Left ventricle myocardium inferior (tissue), 1 donor: ENCODE measurements at regions of chr13 and their contacts with region 1.

Region 1: GRCh38 chr13:28636674-28637317 is 22.1 kb upstream of the POMP start:
- DNase-seq: no peak
- H3K4me3 ChIP-seq: no peak overlapping the region
- H3K27ac ChIP-seq: peak overlapping the region; percentile 59
- H3K4me1 ChIP-seq: peaks cover 36% of the 10 kb centered on the region
- H3K27me3 ChIP-seq: no peaks in the 10 kb centered on the region
- CTCF ChIP-seq: peak; percentile 93

Region 2: GRCh38 chr13:28324181-28324789 is 312.5 kb before region 1 on chr13:
- intact Hi-C with region 1: loop called (anchors 5 kb)
- DNase-seq: peak; percentile 33
- H3K4me3 ChIP-seq: peak overlapping the region; percentile 1
- H3K27ac ChIP-seq: peak overlapping the region; percentile 77
- H3K4me1 ChIP-seq: peaks cover 64% of the 10 kb centered on the region
- H3K27me3 ChIP-seq: no peaks in the 10 kb centered on the region
- CTCF ChIP-seq: peak; percentile 85

Region 3: DNA sequence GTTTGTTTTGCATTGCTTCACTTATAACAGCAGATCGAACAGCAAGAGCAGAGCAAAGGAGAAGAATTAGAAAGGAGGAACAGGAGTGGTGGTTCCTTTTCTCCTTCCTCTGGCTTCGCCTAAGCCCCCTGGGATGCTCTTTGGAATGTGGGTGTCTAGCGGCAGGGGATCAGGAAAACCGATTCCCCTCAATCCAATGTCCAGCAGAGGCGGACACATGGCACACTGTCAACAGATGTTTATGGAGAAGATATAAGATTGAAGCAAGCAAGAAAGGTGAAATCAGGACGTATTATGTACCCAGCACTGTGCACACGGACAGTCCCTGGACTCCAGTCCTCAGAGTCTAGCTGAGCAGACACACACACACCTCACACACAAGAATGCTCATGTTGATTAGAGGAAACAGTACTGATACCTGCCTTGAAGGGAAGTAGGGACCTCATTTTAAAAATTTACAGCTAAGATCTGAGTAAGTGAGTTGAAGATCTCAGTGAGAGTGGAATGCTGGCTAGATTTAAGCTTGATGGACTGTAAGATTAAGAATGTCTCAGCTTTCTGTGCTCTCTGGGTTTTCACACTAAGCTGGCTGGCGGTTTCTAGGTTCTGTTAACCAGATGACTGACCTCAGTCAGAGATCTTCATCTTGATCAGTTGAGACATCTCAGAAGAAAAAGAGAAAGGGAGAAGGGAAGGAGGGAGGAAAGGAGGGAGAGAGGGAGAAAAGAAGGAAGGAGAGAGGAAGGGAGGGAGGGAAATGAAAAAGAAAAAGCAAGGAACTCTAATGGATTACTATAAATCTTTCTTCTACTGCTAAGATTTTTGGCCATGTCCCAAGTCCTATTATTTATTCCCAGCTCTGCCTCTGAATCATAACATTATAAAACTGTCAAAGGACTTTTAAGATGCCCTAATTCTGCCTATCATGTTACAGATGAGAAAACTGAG is 186.7 kb before region 1 on chr13:
- intact Hi-C with region 1: no loop called
- DNase-seq: no peak
- H3K4me3 ChIP-seq: no peak overlapping the region
- H3K27ac ChIP-seq: no peak overlapping the region
- H3K4me1 ChIP-seq: peaks cover 33% of the 10 kb centered on the region
- H3K27me3 ChIP-seq: no peaks in the 10 kb centered on the region
- CTCF ChIP-seq: no peak

Region 4: DNA sequence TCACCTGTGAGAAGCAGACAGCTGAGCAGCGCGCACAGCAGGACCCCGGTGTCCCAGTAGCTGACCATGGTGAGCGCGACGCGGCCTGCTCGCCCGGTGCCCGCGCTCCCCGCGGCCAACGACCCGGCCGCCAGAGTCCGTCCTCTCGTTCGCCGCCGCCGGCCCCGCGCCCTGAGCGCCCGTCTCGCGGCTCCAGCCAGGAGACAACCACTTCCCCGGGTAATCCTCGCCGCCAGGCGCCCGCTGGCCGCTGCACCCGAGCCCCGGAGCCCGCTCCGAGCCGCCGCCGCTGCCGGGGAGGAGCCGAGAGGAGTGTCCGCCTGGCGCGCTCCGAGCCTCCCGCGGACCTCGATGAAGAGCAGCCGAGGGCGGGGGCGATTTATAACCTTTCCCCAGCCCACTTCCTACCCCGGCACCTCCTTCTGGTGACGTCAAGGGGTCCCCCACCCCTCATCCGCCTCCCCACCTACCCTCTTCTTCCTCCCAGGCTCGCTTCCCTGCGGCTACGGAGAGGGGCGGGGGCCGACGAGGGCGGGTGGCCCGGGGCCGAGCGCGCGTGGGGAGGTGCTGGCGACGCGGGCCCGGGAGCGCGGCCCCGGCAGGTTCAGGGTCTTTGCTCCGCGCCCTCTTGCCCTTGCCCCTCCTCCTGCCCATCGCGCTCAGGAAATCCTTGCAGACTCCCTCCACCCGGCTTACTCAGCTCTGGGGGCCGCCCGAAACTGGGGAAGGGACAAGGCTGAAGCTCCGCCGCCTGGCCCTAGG is 141.8 kb before region 1 on chr13 and contains the start of gene FLT1:
- intact Hi-C with region 1: loop called (anchors 10 kb)
- DNase-seq: peak; percentile 77
- H3K4me3 ChIP-seq: peak within 1 kb of the TSS; percentile 75
- H3K27ac ChIP-seq: peak within 1 kb of the TSS; percentile 92
- H3K4me1 ChIP-seq: peaks cover 38% of the 10 kb centered on the region
- H3K27me3 ChIP-seq: peaks cover 71% of the 10 kb centered on the region
- CTCF ChIP-seq: no peak
- total RNA-seq, gene FLT1: 40.7 TPM

Region 5: GRCh38 chr13:28819735-28820098 is 182.9 kb after region 1 on chr13:
- intact Hi-C with region 1: no loop called
- DNase-seq: peak; percentile 69
- H3K4me3 ChIP-seq: peak overlapping the region; percentile 71
- H3K27ac ChIP-seq: peak overlapping the region; percentile 54
- H3K4me1 ChIP-seq: peaks cover 13% of the 10 kb centered on the region
- H3K27me3 ChIP-seq: peaks cover 61% of the 10 kb centered on the region
- CTCF ChIP-seq: peak; percentile 49